Panc1 (cell line): ENCODE measurements at regions of chr19 and their contacts with region 1.

Region 1: GRCh38 chr19:21141787-21142464 is at the start of gene ZNF431:
- DNase-seq: peak; percentile 64
- ATAC-seq: peak; percentile 100
- H3K4me3 ChIP-seq: peak within 1 kb of the TSS; percentile 81 to 83
- H3K27ac ChIP-seq: peak within 1 kb of the TSS; percentile 84
- H3K4me1 ChIP-seq: peaks cover 2% of the 10 kb centered on the region; the same call in 1 of the 2 replicates
- H3K27me3 ChIP-seq: no peaks in the 10 kb centered on the region
- CTCF ChIP-seq: no peak
- total RNA-seq, gene ZNF431: 10.8 TPM

Region 2: DNA sequence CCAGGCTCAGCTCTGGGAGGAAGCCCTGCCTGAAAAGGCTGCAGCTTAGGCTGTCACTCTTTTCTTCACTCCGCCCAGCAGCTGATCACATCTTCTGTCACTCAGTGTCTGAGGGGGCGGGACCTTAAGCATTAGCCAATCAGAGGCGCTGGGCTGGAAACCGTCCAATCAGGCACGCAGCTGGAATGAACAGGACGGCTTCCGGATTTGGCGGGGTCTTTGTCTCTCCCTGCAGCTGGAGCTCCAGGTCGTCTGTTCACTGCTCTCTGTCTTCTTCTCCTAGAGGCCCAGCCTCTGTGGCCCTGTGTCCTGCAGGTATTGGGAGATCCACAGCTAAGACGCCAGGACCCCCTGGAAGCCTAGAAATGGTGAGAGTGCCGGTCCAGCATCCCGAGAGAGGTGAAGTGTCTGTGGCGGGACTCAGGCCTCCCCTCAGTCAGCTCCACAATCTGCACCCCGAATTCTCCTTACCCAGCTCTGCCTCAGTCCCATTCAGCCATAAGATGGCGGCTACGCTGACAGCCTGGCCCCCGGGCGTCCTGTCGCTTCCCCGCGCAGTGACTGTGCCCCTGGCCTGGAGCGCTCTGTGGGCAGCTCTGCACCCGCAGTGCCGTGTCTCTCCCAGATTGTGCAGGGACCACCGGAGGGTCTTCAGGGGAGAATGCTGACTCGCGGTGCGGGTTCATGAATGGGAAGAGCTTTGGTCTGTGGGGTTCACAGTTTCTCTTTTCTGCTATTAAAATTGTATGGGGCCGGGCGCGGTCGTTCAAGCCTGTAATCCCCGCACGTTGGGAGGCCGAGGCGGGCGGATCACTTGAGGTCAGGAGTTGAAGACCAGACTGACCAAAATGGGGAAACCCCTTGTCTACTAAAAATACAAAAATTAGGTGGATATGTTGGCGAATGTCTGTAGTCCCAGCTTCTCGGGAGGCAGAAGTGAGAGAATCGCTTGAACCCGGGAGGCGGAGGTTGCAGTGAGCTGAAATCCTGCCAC is 365.5 kb before region 1 on chr19 and contains the start of gene ZNF66:
- CTCF ChIA-PET with region 1: no interaction called
- POLR2A ChIA-PET with region 1: interaction called, 10 read pairs
- in situ Hi-C with region 1: no loop called
- intact Hi-C with region 1: no loop called
- DNase-seq: peak; percentile 78
- ATAC-seq: peak; percentile 100
- H3K4me3 ChIP-seq: peak within 1 kb of the TSS; percentile 79 to 85
- H3K27ac ChIP-seq: peak within 1 kb of the TSS; percentile 69
- H3K4me1 ChIP-seq: no peaks in the 10 kb centered on the region
- H3K27me3 ChIP-seq: no peaks in the 10 kb centered on the region
- CTCF ChIP-seq: no peak
- total RNA-seq, gene ZNF66: 5.3 TPM